WTC11 (cell line): ENCODE measurements at regions of chr1 and their contacts with region 1.

Region 1: DNA sequence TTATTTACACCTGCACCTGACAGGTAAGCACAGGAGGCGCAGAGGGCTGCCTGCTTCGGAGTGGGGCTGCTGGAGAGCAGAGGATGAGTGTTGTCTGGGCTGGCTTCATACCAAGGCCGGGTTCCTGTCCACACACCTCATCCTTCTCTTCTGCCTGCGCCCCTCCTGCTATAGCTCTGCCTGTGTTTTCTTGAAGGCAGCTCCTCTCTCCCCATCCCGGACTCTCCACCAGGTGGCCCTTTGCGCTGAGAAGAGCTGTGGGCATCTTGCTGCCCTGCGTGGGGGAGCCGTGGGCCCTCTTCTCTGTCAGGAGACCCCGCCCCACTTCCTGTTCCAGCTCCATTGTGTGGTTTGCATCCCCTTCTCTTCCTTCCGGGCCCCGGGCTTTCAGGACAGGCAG is 35.0 kb downstream of the ARHGEF10L start:
- DNase-seq: peak; percentile 55
- ATAC-seq: peak; percentile 55
- H3K4me3 Mint-ChIP-seq: no peak overlapping the region
- H3K27ac Mint-ChIP-seq: peak overlapping the region; percentile 91
- H3K4me1 Mint-ChIP-seq: peaks cover 82% of the 10 kb centered on the region
- H3K27me3 Mint-ChIP-seq: no peaks in the 10 kb centered on the region
- CTCF ChIP-seq: peak; percentile 21; the same call in 1 of the 2 replicates

Region 2: GRCh38 chr1:17307946-17308345 is 266.6 kb before region 1 on chr1 and contains the start of gene PADI4:
- CTCF ChIA-PET with region 1: no interaction called
- POLR2A ChIA-PET with region 1: no interaction called
- DNase-seq: no peak
- ATAC-seq: no peak
- H3K4me3 Mint-ChIP-seq: no peak within 1 kb of the TSS
- H3K27ac Mint-ChIP-seq: no peak within 1 kb of the TSS
- H3K4me1 Mint-ChIP-seq: peaks cover 29% of the 10 kb centered on the region
- H3K27me3 Mint-ChIP-seq: no peaks in the 10 kb centered on the region
- CTCF ChIP-seq: no peak
- total RNA-seq, gene PADI4: 0.26 to 0.39 TPM (median 0.27 TPM) in 3 replicates

Region 3: DNA sequence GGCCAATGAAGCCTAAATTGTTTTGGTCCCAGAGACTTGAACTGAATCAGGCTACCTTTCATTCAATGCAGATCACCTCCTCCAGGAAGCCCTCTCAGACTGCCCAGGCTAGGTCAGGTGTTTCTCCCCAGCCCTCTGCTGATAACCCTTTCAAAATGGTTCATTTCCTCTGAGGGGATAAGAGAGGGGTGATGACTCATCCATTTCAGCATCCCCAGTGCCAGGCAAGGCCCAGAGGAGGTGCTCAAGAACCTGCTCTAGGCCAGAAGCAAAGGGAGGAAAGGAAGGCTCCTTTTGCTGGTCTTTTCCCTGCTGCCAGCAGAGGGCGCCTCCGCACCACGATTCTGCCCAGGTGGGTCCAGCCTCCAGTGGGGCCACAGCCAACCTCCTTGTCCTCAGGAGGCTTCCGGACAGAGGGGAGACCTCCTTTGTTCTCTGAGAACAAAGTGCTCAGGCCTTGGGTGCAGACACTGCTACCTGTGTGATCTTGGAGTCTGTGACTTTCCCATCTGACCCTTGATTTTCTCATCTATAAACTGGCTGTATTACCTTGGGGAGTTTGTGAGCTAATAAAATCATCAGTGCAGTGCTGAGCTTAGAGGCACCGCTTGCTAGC is 80.3 kb before region 1 on chr1:
- CTCF ChIA-PET with region 1: interaction called, 27 read pairs
- POLR2A ChIA-PET with region 1: no interaction called
- DNase-seq: peak; percentile 91
- ATAC-seq: peak; percentile 97
- H3K4me3 Mint-ChIP-seq: no peak overlapping the region
- H3K27ac Mint-ChIP-seq: peak overlapping the region; percentile 40; the same call in 1 of the 2 replicates
- H3K4me1 Mint-ChIP-seq: peaks cover 23% of the 10 kb centered on the region
- H3K27me3 Mint-ChIP-seq: no peaks in the 10 kb centered on the region
- CTCF ChIP-seq: peak; percentile 97

Region 4: DNA sequence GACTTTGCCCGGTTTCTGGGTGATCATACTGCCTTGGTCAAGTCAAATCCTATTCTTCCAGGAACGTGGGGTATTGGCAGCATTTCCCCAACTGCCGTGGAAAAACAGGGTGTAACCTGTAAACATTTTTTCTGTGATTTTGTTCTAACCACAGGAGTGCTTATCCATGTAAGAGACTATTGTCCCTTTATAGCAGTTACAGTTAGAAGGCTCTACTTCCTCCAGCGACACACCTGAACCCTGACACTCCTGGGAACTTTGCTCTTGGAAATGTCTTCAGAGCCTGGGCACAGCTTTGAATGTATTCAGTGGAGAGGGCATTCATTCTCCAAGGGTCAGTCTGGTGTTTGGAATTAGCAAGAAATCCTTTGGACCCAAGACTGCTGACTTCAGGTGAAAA is 61.4 kb before region 1 on chr1:
- CTCF ChIA-PET with region 1: interaction called, 21 read pairs
- POLR2A ChIA-PET with region 1: no interaction called
- DNase-seq: no peak
- ATAC-seq: no peak
- H3K4me3 Mint-ChIP-seq: no peak overlapping the region
- H3K27ac Mint-ChIP-seq: no peak overlapping the region
- H3K4me1 Mint-ChIP-seq: peaks cover 17% of the 10 kb centered on the region
- H3K27me3 Mint-ChIP-seq: peaks cover 2% of the 10 kb centered on the region; the same call in 1 of the 2 replicates
- CTCF ChIP-seq: no peak

Region 5: GRCh38 chr1:17540255-17541001 is 34.1 kb before region 1 on chr1:
- CTCF ChIA-PET with region 1: interaction called, 77 read pairs
- POLR2A ChIA-PET with region 1: interaction called, 8 read pairs
- DNase-seq: peak; percentile 95
- ATAC-seq: peak; percentile 80
- H3K4me3 Mint-ChIP-seq: peak overlapping the region; percentile 83
- H3K27ac Mint-ChIP-seq: peak overlapping the region; percentile 88
- H3K4me1 Mint-ChIP-seq: peaks cover 55% of the 10 kb centered on the region
- H3K27me3 Mint-ChIP-seq: no peaks in the 10 kb centered on the region
- CTCF ChIP-seq: no peak

Region 6: DNA sequence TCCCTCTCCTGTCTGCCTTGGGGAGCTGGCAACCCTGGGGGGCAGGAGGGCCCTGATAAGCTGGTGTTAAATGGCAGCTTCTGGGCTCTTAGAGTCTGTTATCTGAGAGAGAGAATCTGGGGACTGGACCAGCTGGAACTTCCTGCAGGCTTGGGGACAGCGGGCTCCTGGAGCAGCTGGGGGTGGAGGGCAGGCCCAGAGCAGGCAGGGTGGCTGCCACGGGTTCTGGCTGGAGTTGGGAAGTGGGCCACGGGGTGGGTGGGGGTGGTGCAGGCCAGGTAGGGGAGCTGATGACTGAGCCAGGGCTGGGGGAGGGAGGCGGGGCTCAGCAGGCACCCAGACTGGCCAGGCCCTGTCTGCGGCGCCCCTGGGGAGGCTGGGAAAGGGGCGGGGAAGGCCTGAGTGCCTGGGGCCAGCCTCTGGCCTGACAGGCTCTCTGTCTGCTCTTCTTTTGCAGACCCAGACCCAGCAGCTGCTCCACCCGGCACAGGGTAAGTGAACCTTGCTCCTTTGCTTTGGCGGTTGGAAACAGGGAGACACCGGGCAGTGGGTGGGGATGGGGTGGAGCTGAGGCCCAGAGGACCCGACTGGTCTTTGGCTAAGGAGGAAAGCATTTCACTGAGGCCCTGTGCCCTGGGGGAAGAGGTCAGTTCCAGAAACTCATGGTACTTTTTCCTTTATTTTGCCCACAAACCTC is 13.6 kb after region 1 on chr1:
- CTCF ChIA-PET with region 1: interaction called, 147 read pairs
- POLR2A ChIA-PET with region 1: interaction called, 3 read pairs
- DNase-seq: peak; percentile 56
- ATAC-seq: peak; percentile 53
- H3K4me3 Mint-ChIP-seq: no peak overlapping the region
- H3K27ac Mint-ChIP-seq: peak overlapping the region; percentile 89
- H3K4me1 Mint-ChIP-seq: peaks cover 38% of the 10 kb centered on the region
- H3K27me3 Mint-ChIP-seq: no peaks in the 10 kb centered on the region
- CTCF ChIP-seq: no peak

Region 7: DNA sequence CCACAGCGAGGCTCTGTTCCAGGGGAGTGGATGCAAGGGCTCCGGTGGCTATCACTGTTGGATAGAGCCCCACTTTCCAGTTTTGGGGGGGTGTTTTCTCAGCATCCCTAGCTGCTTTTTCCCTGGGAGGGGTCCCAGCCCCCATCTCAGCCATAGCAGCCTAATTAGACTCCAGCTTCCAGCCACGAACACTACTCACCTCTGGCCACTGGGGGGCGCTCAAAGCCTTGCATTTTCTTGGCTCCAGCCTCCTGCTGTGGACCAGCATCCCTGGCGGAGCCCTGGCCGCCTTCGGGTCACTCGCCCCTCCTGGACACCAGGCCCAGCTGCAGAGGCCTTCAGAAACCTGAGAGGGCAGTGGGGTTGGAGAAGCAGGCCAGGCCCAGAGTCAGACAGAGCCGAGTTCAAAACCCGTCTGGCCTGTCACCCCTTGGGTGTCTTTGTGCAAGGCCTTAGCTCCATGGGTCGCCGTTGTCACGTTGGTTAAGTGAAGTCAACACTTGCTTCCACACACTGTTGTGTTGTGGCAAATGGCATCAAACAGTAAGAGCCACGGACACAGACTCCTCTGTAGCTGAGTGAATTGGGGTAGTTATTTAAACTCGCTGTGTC is 87.1 kb after region 1 on chr1:
- CTCF ChIA-PET with region 1: interaction called, 10 read pairs
- POLR2A ChIA-PET with region 1: no interaction called
- DNase-seq: peak; percentile 88
- ATAC-seq: peak; percentile 76
- H3K4me3 Mint-ChIP-seq: no peak overlapping the region
- H3K27ac Mint-ChIP-seq: peak overlapping the region; percentile 74
- H3K4me1 Mint-ChIP-seq: peaks cover 11% of the 10 kb centered on the region
- H3K27me3 Mint-ChIP-seq: no peaks in the 10 kb centered on the region
- CTCF ChIP-seq: peak; percentile 97